Panc1 (cell line): ENCODE measurements at regions of chr5 and their contacts with region 1.

Region 1: DNA sequence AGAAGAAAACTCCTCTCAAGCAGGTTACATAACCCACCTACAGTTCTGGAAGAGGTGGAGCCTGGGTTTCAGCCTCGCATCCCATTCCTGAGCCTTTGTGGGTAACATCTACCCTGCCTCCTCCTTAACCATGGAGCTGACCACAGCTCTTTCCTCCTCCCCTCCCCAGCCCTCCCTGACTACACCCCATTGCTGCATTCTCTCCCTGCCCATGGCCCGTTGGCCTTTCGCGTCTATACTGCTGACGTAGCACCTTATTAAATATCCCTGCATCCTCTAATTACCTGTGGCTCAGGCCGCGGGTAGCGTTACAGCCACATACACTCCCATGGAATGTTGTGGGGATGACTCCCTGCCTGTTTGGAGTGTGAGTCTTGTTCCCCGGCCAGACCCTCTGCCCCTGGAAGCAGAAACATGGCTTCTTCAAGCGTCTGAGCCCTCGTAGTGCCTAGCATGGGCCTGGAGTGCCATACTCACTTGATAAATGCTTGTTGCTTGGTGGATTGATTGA is 72.8 kb downstream of the WWC1 start:
- DNase-seq: no peak
- ATAC-seq: 0 out of 2 replicates have a peak, but pooled peaks have one; percentile 13
- H3K4me3 ChIP-seq: no peak overlapping the region
- H3K27ac ChIP-seq: no peak overlapping the region
- H3K4me1 ChIP-seq: peaks cover 14% of the 10 kb centered on the region
- H3K27me3 ChIP-seq: no peaks in the 10 kb centered on the region
- CTCF ChIP-seq: no peak

Region 2: DNA sequence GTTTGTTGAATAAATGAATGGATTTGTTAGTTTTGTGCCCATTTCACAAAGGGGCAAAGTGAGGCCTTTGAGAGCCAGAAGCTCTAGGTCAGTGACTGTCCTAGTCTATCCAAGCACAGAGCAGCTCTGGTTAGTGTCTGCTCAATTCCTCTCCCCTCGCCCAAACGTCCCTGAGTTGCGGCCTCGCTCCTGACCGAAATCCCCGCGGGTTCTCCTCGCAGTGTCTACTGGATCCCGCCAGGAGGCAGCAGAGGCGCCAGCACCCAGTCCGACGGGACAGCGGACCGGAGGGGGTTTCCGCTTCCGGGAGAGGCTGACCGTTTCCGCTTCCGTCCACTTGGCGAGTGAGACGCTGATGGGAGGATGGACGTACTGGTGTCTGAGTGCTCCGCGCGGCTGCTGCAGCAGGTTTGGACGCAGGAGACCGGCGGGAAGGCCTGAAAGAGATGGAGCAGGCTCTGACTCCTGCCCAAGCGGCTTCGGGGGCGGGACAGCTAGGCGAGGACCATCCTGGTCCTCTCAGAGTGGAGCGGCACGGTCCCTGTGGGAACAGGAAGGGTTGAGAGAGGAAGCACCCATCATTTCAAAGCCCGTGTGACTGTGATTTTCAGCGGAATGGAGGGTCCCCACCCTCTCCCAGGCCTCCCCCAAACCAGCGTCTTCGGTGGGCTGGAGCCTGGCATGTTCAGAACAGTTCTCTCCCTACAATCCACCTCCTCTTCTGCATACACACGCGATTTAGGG is 122.1 kb after region 1 on chr5 and contains the start of gene RARS1:
- CTCF ChIA-PET with region 1: no interaction called
- POLR2A ChIA-PET with region 1: interaction called, 14 read pairs
- in situ Hi-C with region 1: no loop called
- intact Hi-C with region 1: no loop called
- DNase-seq: peak; percentile 90
- ATAC-seq: peak; percentile 99
- H3K4me3 ChIP-seq: peak within 1 kb of the TSS; percentile 95 to 99
- H3K27ac ChIP-seq: peak within 1 kb of the TSS; percentile 93
- H3K4me1 ChIP-seq: no peaks in the 10 kb centered on the region; the same call in 1 of the 2 replicates
- H3K27me3 ChIP-seq: no peaks in the 10 kb centered on the region
- CTCF ChIP-seq: peak; percentile 98
- total RNA-seq, gene RARS1: 128 TPM